ENCODE measurements at regions of chr2 and their contacts with region 1.

Region 1: DNA sequence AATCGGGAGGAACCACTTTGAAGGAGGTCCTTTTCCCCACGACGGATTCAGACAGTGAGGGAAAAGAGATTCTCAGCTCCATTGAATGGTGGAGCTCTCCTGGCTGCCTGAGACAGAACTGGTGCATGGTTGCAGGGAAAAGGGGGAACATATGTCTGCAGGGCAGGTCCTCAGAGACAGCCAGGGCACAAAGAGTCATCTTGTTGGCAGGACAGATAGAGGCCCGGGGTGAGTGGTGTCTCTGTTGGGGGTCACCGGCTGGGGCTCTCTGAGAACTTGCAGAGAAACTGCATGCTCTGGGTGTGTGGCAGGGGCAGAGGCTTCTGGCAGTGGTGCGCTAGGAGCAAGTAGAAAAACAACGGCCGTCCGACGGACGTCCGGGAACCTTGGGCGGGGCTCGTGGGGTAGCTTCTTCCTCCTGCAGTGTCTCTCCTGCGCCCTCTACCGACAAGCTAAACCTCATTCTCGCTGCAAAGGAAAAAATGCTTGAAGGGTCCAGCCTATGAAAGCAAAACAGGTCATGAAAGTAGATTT is 94.3 kb downstream of the CDCA7 start:
- DNase-seq: peak; percentile 54 to 72
- ATAC-seq: peak; percentile 63 to 86
- H3K4me3 ChIP-seq: peak overlapping the region; percentile 13 to 43 (median 36)
- H3K27ac ChIP-seq: peak overlapping the region; percentile 12 to 57 (median 46)
- H3K4me1 ChIP-seq: no peaks in the 10 kb centered on the region
- H3K27me3 ChIP-seq: no peaks in the 10 kb centered on the region
- CTCF ChIP-seq: peak; percentile 69 to 83 (median 73)
- POLR2A ChIP-seq: peak in 1 of 2 donors; percentile 13

Region 2: DNA sequence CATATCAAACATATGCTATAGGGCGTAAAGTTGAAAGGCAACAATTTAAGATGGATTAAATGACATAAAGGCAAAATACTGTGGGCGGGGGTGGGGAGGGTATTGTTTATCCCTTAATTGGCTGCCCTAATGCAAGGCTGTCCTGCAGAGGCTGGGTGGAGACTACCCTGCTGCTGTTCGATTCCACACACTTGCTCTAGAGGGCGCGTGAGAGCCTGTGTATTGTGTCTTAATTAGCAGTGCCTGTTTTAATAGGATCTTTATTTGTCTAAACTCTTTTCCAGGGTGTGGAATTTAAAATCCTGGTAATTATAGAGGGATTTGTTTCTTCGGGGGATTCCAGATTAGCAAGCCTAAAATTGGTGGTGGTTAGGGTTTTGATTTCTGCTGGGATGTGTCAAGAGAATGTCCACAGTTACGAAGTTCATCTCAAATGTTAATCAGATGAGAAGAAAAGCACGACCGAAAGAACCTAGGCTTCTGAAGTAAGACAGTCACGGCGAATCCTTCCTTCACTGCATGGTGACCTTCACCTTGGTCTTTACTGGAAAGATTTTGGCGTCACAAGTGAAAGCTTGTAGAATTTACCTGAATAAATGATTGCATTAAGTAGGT is 476.9 kb before region 1 on chr2:
- in situ Hi-C with region 1: no loop called
- intact Hi-C with region 1: loop called (anchors 5 kb)
- DNase-seq: no peak
- ATAC-seq: peak in 1 of 2 donors; percentile 57
- H3K4me3 ChIP-seq: no peak overlapping the region
- H3K27ac ChIP-seq: no peak overlapping the region
- H3K4me1 ChIP-seq: peaks cover 7 to 16% of the 10 kb centered on the region in 2 donors
- H3K27me3 ChIP-seq: no peaks in the 10 kb centered on the region
- CTCF ChIP-seq: peak; percentile 47 to 92 (median 56)
- POLR2A ChIP-seq: no peak

Region 3: GRCh38 chr2:173239644-173240043 is 209.4 kb before region 1 on chr2:
- in situ Hi-C with region 1: no loop called
- intact Hi-C with region 1: loop called (anchors 10 kb)
- DNase-seq: no peak
- ATAC-seq: no peak
- H3K4me3 ChIP-seq: no peak overlapping the region
- H3K27ac ChIP-seq: no peak overlapping the region
- H3K4me1 ChIP-seq: no peaks in the 10 kb centered on the region
- H3K27me3 ChIP-seq: no peaks in the 10 kb centered on the region
- CTCF ChIP-seq: no peak
- POLR2A ChIP-seq: no peak